ENCODE measurements at regions of chr21 and their contacts with region 1.

Region 1: DNA sequence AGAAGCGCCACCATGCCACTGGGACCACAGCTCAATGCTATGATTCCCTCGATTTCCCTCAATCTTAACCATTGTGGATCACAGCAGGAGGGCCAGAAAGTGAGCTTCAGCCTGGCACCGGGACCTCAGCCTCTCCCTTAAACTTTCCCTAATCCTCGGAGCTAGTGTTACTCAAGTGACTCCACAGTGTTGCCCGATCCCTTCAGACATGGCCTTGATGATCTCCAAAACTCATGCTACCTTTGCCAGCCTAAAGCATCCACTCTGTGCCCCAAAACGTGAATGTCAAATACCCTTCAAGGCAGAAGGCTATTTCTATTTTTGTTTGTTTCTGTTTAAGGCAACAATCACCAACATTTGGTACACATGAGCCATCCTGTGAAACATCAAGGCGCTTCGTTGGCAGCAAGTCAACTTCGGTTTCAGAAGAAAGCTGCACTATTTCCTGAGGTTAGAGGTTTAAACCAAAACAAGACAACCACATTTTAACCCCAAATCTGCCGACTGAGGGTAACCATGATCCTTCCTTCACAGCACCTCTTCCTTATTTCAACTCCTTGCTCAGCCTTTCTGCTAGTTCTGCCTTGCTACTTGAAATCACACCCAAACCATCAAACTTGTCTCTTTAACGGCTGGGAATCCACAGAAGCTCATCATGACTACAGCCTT is 94.4 kb upstream of the KRTAP19-8 start:
- DNase-seq: peak in 8 of 9 donors; percentile 58 to 94 (median 92)
- ATAC-seq: peak; percentile 96
- H3K4me3 ChIP-seq: peak overlapping the region; percentile 59
- H3K4me3 Mint-ChIP-seq: peak overlapping the region; percentile 83 to 91 (median 86)
- H3K27ac ChIP-seq: no peak overlapping the region
- H3K27ac Mint-ChIP-seq: peak overlapping the region; percentile 84 to 96 (median 94)
- H3K4me1 ChIP-seq: peaks cover 25 to 50% of the 10 kb centered on the region in 2 donors
- H3K4me1 Mint-ChIP-seq: peaks cover 41 to 75% (median 69%) of the 10 kb centered on the region in 7 donors
- H3K27me3 ChIP-seq: no peaks in the 10 kb centered on the region
- H3K27me3 Mint-ChIP-seq: no peaks in the 10 kb centered on the region

Region 2: GRCh38 chr21:31088315-31088714 is 44.4 kb before region 1 on chr21:
- CTCF ChIA-PET with region 1: no interaction called
- POLR2A ChIA-PET with region 1: no interaction called
- intact Hi-C with region 1: no loop called
- DNase-seq: peak in 1 of 9 donors; percentile 6
- ATAC-seq: no peak
- H3K4me3 ChIP-seq: no peak overlapping the region
- H3K4me3 Mint-ChIP-seq: peak overlapping the region in 1 of 10 donors; percentile 28
- H3K27ac ChIP-seq: no peak overlapping the region
- H3K27ac Mint-ChIP-seq: peak overlapping the region in 1 of 9 donors; percentile 39
- H3K4me1 ChIP-seq: no peaks in the 10 kb centered on the region
- H3K4me1 Mint-ChIP-seq: peaks cover 0 to 17% (median 9%) of the 10 kb centered on the region in 7 donors
- H3K27me3 ChIP-seq: no peaks in the 10 kb centered on the region
- H3K27me3 Mint-ChIP-seq: peaks cover 0 to 41% (median 4%) of the 10 kb centered on the region in 5 donors

Region 3: GRCh38 chr21:31117128-31117916 is 15.4 kb before region 1 on chr21:
- CTCF ChIA-PET with region 1: interaction called, 5 read pairs
- POLR2A ChIA-PET with region 1: interaction called, 6 read pairs
- intact Hi-C with region 1: loop called in 1 of 2 experiments (anchors 1 kb)
- DNase-seq: no peak
- ATAC-seq: peak; percentile 64
- H3K4me3 ChIP-seq: no peak overlapping the region
- H3K4me3 Mint-ChIP-seq: peak overlapping the region in 1 of 10 donors; percentile 3
- H3K27ac ChIP-seq: no peak overlapping the region
- H3K27ac Mint-ChIP-seq: peak overlapping the region in 7 of 9 donors; percentile 20 to 64 (median 56)
- H3K4me1 ChIP-seq: no peaks in the 10 kb centered on the region
- H3K4me1 Mint-ChIP-seq: peaks cover 0 to 29% (median 17%) of the 10 kb centered on the region in 7 donors
- H3K27me3 ChIP-seq: no peaks in the 10 kb centered on the region
- H3K27me3 Mint-ChIP-seq: no peaks in the 10 kb centered on the region

Region 4: GRCh38 chr21:31161157-31161556 is 28.4 kb after region 1 on chr21:
- CTCF ChIA-PET with region 1: interaction called, 11 read pairs
- POLR2A ChIA-PET with region 1: interaction called, 31 read pairs
- intact Hi-C with region 1: loop called (anchors 1 kb)
- DNase-seq: peak in 1 of 9 donors; percentile 35
- ATAC-seq: peak; percentile 28
- H3K4me3 ChIP-seq: no peak overlapping the region
- H3K4me3 Mint-ChIP-seq: peak overlapping the region; percentile 14 to 88 (median 77)
- H3K27ac ChIP-seq: peak overlapping the region; percentile 69
- H3K27ac Mint-ChIP-seq: peak overlapping the region; percentile 13 to 99 (median 95)
- H3K4me1 ChIP-seq: peaks cover 0 to 84% of the 10 kb centered on the region in 2 donors
- H3K4me1 Mint-ChIP-seq: peaks cover 52 to 94% (median 92%) of the 10 kb centered on the region in 7 donors
- H3K27me3 ChIP-seq: no peaks in the 10 kb centered on the region
- H3K27me3 Mint-ChIP-seq: no peaks in the 10 kb centered on the region

Region 5: DNA sequence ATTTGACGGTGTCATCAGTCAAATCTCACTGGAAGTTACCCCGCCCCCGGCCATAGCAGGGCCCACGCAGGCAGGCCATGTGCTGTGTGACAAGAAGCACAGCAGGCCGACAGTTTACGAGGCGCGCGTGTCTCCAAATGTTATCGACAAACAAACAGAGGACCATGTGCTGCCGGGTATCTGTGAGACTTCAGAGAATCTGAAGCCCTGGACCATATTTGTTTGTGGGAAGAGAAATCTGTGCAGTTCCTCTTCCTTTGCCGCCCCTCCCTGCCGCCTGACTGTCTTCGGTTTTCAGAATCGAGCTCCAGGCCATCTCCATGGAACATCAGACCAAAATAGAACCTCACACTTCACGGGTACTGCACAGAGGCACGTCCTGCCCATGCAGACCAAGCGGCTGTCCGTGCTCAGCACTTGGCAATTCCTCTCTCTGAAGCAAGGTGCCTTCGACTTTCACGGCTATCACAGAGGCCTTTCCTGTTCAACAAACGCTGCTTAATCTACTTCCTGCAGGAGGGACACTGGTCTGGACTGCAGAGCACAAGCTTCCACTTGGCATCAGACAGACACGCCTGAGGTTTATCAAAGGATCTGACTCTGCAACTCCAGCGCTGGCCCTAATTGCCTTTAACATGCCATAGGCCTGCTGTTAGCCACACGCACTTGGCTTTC is 41.3 kb after region 1 on chr21:
- CTCF ChIA-PET with region 1: interaction called, 8 read pairs
- POLR2A ChIA-PET with region 1: interaction called, 10 read pairs
- intact Hi-C with region 1: no loop called
- DNase-seq: peak in 5 of 9 donors; percentile 41 to 64 (median 45)
- ATAC-seq: peak; percentile 69
- H3K4me3 ChIP-seq: peak overlapping the region; percentile 48
- H3K4me3 Mint-ChIP-seq: peak overlapping the region; percentile 79 to 93 (median 86)
- H3K27ac ChIP-seq: peak overlapping the region; percentile 71
- H3K27ac Mint-ChIP-seq: peak overlapping the region; percentile 80 to 98 (median 94)
- H3K4me1 ChIP-seq: peaks cover 7 to 83% of the 10 kb centered on the region in 2 donors
- H3K4me1 Mint-ChIP-seq: peaks cover 56 to 99% (median 84%) of the 10 kb centered on the region in 7 donors
- H3K27me3 ChIP-seq: no peaks in the 10 kb centered on the region
- H3K27me3 Mint-ChIP-seq: no peaks in the 10 kb centered on the region

Region 6: GRCh38 chr21:31293986-31294385 is 161.3 kb after region 1 on chr21:
- CTCF ChIA-PET with region 1: no interaction called
- POLR2A ChIA-PET with region 1: no interaction called
- intact Hi-C with region 1: no loop called
- DNase-seq: peak in 1 of 9 donors; percentile 66
- ATAC-seq: no peak
- H3K4me3 ChIP-seq: no peak overlapping the region
- H3K4me3 Mint-ChIP-seq: no peak overlapping the region
- H3K27ac ChIP-seq: no peak overlapping the region
- H3K27ac Mint-ChIP-seq: no peak overlapping the region
- H3K4me1 ChIP-seq: no peaks in the 10 kb centered on the region
- H3K4me1 Mint-ChIP-seq: peaks cover 0 to 22% (median 0%) of the 10 kb centered on the region in 7 donors
- H3K27me3 ChIP-seq: no peaks in the 10 kb centered on the region
- H3K27me3 Mint-ChIP-seq: no peaks in the 10 kb centered on the region

Region 7: DNA sequence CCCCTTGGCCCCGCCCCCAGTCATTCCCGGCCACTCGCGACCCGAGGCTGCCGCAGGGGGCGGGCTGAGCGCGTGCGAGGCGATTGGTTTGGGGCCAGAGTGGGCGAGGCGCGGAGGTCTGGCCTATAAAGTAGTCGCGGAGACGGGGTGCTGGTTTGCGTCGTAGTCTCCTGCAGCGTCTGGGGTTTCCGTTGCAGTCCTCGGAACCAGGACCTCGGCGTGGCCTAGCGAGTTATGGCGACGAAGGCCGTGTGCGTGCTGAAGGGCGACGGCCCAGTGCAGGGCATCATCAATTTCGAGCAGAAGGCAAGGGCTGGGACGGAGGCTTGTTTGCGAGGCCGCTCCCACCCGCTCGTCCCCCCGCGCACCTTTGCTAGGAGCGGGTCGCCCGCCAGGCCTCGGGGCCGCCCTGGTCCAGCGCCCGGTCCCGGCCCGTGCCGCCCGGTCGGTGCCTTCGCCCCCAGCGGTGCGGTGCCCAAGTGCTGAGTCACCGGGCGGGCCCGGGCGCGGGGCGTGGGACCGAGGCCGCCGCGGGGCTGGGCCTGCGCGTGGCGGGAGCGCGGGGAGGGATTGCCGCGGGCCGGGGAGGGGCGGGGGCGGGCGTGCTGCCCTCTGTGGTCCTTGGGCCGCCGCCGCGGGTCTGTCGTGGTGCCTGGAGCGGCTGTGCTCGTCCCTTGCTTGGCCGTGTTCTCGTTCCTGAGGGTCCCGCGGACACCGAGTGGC is 527.0 kb after region 1 on chr21 and contains the start of gene SOD1:
- CTCF ChIA-PET with region 1: no interaction called
- POLR2A ChIA-PET with region 1: no interaction called
- intact Hi-C with region 1: loop called (anchors 1 kb)
- DNase-seq: peak in 8 of 9 donors; percentile 20 to 98 (median 97)
- ATAC-seq: peak; percentile 97
- H3K4me3 ChIP-seq: peak within 1 kb of the TSS; percentile 79
- H3K4me3 Mint-ChIP-seq: peak within 1 kb of the TSS; percentile 95 to 100 (median 100)
- H3K27ac ChIP-seq: peak within 1 kb of the TSS; percentile 88
- H3K27ac Mint-ChIP-seq: peak within 1 kb of the TSS; percentile 97 to 100 (median 98)
- H3K4me1 ChIP-seq: peaks cover 15 to 50% of the 10 kb centered on the region in 2 donors
- H3K4me1 Mint-ChIP-seq: peaks cover 40 to 80% (median 68%) of the 10 kb centered on the region in 7 donors
- H3K27me3 ChIP-seq: no peaks in the 10 kb centered on the region
- H3K27me3 Mint-ChIP-seq: no peaks in the 10 kb centered on the region
- total RNA-seq, gene SOD1: 110 to 218 (median 182) TPM

Measured in naive thymus-derived CD4-positive, alpha-beta T cell (primary cell).